ENCODE measurements at regions of chr19 and their contacts with region 1.

Region 1: GRCh38 chr19:41945135-41945766 is 13.9 kb downstream of the RABAC1 start:
- DNase-seq: peak; percentile 95
- H3K4me3 Mint-ChIP-seq: peak overlapping the region; percentile 53
- H3K27ac Mint-ChIP-seq: peak overlapping the region; percentile 98
- H3K4me1 Mint-ChIP-seq: peaks cover 42% of the 10 kb centered on the region
- H3K27me3 Mint-ChIP-seq: peaks cover 2% of the 10 kb centered on the region

Region 2: DNA sequence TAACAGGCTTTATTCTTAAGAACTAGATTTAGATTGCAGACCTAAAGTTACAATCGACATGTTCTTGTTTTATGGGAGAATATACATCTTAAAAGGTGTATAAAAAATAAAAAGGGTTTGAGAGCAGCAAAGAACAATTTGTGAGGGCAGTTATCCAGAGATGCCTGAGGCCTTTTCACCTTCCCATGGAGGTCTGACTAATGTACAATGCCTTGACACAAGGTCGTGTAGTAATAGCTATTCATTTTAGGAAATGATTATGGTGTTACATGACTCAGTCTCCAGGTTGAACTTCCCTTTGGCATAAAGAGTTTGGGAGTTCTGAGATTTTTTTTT is 169.9 kb before region 1 on chr19:
- CTCF ChIA-PET with region 1: no interaction called
- POLR2A ChIA-PET with region 1: no interaction called
- intact Hi-C with region 1: loop called (anchors 10 kb)
- DNase-seq: no peak
- H3K4me3 Mint-ChIP-seq: no peak overlapping the region
- H3K27ac Mint-ChIP-seq: no peak overlapping the region
- H3K4me1 Mint-ChIP-seq: peaks cover 34% of the 10 kb centered on the region
- H3K27me3 Mint-ChIP-seq: peaks cover 65% of the 10 kb centered on the region

Region 3: GRCh38 chr19:41859618-41860418 is 85.4 kb before region 1 on chr19 and contains the start of gene RPS19:
- CTCF ChIA-PET with region 1: interaction called, 18 read pairs
- POLR2A ChIA-PET with region 1: interaction called, 13 read pairs
- intact Hi-C with region 1: loop called (anchors 1 kb)
- DNase-seq: peak; percentile 99
- H3K4me3 Mint-ChIP-seq: peak within 1 kb of the TSS; percentile 87
- H3K27ac Mint-ChIP-seq: peak within 1 kb of the TSS; percentile 94
- H3K4me1 Mint-ChIP-seq: peaks cover 43% of the 10 kb centered on the region
- H3K27me3 Mint-ChIP-seq: no peaks in the 10 kb centered on the region
- total RNA-seq, gene RPS19: 3,181 to 3,314 TPM

Region 4: GRCh38 chr19:41883821-41884733 is 61.2 kb before region 1 on chr19:
- CTCF ChIA-PET with region 1: interaction called, 30 read pairs
- POLR2A ChIA-PET with region 1: interaction called, 22 read pairs
- intact Hi-C with region 1: loop called (anchors 1 kb)
- DNase-seq: peak; percentile 95
- H3K4me3 Mint-ChIP-seq: peak overlapping the region; percentile 95
- H3K27ac Mint-ChIP-seq: peak overlapping the region; percentile 97
- H3K4me1 Mint-ChIP-seq: peaks cover 59% of the 10 kb centered on the region
- H3K27me3 Mint-ChIP-seq: no peaks in the 10 kb centered on the region

Region 5: GRCh38 chr19:41912899-41913537 is 32.2 kb before region 1 on chr19:
- CTCF ChIA-PET with region 1: no interaction called
- POLR2A ChIA-PET with region 1: no interaction called
- intact Hi-C with region 1: no loop called
- DNase-seq: no peak
- H3K4me3 Mint-ChIP-seq: no peak overlapping the region
- H3K27ac Mint-ChIP-seq: no peak overlapping the region
- H3K4me1 Mint-ChIP-seq: peaks cover 23% of the 10 kb centered on the region
- H3K27me3 Mint-ChIP-seq: peaks cover 21% of the 10 kb centered on the region

Region 6: GRCh38 chr19:41928221-41928683 is 17.0 kb before region 1 on chr19 and contains the start of gene ERFL:
- CTCF ChIA-PET with region 1: interaction called, 3 read pairs
- POLR2A ChIA-PET with region 1: no interaction called
- intact Hi-C with region 1: loop called (anchors 2 kb)
- DNase-seq: no peak
- H3K4me3 Mint-ChIP-seq: peak within 1 kb of the TSS; percentile 80
- H3K27ac Mint-ChIP-seq: peak within 1 kb of the TSS; percentile 43
- H3K4me1 Mint-ChIP-seq: peaks cover 15% of the 10 kb centered on the region
- H3K27me3 Mint-ChIP-seq: no peaks in the 10 kb centered on the region
- total RNA-seq, gene ERFL: 1.3 to 2.0 TPM

Region 7: GRCh38 chr19:41934849-41935374 is 10.3 kb before region 1 on chr19:
- CTCF ChIA-PET with region 1: interaction called, 10 read pairs
- POLR2A ChIA-PET with region 1: interaction called, 14 read pairs
- intact Hi-C with region 1: loop called (anchors 1 kb)
- DNase-seq: peak; percentile 88
- H3K4me3 Mint-ChIP-seq: peak overlapping the region; percentile 4
- H3K27ac Mint-ChIP-seq: peak overlapping the region; percentile 55
- H3K4me1 Mint-ChIP-seq: peaks cover 35% of the 10 kb centered on the region
- H3K27me3 Mint-ChIP-seq: peaks cover 1% of the 10 kb centered on the region